ENCODE measurements at regions of chr15 and their contacts with region 1.

Region 1: DNA sequence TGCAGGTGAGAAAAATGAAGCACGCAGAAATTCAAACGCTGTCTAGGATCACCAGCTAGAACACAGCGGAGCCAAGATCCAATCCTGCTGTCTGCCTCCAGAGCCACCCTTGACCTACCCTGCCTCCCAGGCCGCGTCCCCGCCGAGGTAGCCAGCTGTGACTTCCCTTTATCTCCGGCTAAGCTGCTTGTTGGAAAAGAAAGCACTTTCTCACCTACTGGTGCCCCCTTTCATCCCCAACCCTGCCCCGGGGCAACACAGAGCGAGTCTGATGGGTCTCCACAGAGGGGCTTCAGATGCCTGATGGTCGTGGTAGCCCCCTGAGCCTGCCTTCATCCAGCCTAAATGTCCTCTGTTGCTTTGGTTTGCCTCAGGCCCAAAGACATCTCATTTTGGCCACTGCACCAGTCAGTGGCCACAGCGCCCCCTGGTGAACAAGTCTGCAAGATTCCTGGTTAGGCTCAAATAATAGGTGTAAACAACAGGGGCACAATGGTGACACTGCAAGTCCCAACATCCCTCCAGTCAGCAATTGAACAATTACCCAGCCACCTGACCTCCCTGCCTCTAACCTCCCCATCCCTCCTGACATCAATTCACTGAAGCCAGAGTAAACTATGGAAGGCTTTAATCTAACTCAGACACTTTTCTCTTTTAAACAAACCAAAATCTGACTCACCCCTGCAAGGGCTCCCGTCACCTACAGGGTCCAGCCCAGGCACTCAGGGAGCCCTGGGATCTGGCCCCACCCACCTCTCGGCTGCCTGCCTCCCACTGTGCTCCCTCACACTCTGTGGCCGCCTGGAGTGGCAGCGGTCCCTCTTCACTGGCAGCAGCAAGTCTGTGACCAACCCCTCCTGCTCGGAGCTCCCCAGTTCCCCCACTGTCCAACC is 27.3 kb upstream of the BCL2L10 start:
- DNase-seq: peak in 9 of 10 donors; percentile 35 to 96 (median 81)

Region 2: DNA sequence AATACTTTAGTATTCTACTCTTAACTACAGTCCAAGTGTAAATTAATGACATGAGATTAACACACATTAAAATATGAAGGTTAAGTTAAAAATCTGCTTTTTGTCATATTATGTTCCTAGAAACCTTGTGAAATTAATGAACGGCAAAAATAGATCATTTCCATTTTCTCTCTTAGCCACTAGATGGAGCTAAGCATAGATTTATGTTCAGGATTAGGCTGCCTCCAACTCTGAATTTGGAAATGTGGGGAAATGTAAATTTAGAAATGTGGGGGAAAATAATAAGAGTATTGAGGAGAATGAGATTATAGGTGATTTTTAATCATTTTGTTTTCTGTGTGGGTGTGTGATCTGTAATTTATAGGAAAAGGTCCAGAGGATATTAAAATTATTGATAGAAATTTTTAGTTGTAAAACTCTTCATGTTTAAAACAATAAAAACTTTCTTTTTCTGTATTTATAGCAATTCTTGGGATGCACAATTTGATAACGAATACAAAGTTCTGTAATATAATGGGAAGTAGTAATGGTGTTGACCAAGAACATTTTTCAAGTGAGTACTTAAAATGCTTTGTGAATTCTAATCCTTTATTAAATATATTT is 251.2 kb before region 1 on chr15:
- intact Hi-C with region 1: loop called (anchors 1 kb)
- DNase-seq: no peak

Region 3: GRCh38 chr15:51971375-51972133 is 168.3 kb before region 1 on chr15 and contains the start of gene LEO1:
- intact Hi-C with region 1: loop called (anchors 5 kb)
- DNase-seq: peak; percentile 83 to 98 (median 91)

Region 4: GRCh38 chr15:51982013-51982769 is 157.7 kb before region 1 on chr15:
- intact Hi-C with region 1: loop called (anchors 1 kb)
- DNase-seq: peak in 2 of 10 donors; percentile 30 to 40

Measured in posterior cingulate gyrus (tissue), 11 donors.